WTC11 (cell line): ENCODE measurements at regions of chr1 and their contacts with region 1.

Region 1: DNA sequence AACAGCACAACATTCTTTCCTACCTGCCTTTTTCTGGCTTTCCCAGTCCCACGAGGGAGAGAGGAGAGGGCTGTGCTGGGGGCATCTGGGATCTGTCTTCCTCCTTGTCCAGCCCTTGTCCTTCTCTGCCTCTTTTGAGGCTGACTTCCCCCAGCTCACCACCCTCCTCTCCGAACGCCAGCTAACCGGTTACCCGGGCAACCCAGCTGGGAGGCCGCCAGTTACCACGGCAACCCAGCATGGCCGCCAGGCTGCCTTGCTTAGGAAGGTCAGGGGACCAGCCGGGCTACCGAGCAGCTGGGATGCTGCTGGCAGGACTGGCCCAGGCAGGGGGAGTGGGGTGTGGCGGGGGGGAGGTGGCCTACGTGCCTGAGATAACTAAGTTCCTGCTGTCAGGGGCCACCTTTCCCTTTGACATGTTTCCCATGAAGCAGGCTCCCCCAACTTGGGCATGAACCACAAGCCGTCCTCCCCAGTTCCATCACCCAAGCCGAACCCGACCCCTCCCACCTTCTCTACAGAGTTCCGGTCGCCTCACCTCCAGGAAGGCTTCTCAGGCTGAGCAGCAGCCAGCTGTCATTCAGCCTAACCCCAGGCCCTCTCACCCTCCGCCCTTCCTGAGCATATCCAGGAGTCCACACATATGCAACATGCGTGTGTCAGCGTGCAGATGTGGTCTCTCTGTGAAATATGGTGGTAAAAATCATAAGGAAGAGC is 8.7 kb downstream of the PLEKHA6 start:
- DNase-seq: peak; percentile 94
- ATAC-seq: peak; percentile 79
- H3K4me3 Mint-ChIP-seq: peak overlapping the region; percentile 51
- H3K27ac Mint-ChIP-seq: peak overlapping the region; percentile 54
- H3K4me1 Mint-ChIP-seq: peaks cover 32% of the 10 kb centered on the region
- H3K27me3 Mint-ChIP-seq: no peaks in the 10 kb centered on the region; the same call in 1 of the 2 replicates
- CTCF ChIP-seq: no peak

Region 2: GRCh38 chr1:204307334-204307883 is 43.6 kb before region 1 on chr1:
- CTCF ChIA-PET with region 1: interaction called, 14 read pairs
- POLR2A ChIA-PET with region 1: interaction called, 3 read pairs
- DNase-seq: peak; percentile 64
- ATAC-seq: peak; percentile 85
- H3K4me3 Mint-ChIP-seq: peak overlapping the region; percentile 68
- H3K27ac Mint-ChIP-seq: peak overlapping the region; percentile 35; the same call in 1 of the 2 replicates
- H3K4me1 Mint-ChIP-seq: peaks cover 80% of the 10 kb centered on the region
- H3K27me3 Mint-ChIP-seq: peaks cover 4% of the 10 kb centered on the region
- CTCF ChIP-seq: no peak

Region 3: DNA sequence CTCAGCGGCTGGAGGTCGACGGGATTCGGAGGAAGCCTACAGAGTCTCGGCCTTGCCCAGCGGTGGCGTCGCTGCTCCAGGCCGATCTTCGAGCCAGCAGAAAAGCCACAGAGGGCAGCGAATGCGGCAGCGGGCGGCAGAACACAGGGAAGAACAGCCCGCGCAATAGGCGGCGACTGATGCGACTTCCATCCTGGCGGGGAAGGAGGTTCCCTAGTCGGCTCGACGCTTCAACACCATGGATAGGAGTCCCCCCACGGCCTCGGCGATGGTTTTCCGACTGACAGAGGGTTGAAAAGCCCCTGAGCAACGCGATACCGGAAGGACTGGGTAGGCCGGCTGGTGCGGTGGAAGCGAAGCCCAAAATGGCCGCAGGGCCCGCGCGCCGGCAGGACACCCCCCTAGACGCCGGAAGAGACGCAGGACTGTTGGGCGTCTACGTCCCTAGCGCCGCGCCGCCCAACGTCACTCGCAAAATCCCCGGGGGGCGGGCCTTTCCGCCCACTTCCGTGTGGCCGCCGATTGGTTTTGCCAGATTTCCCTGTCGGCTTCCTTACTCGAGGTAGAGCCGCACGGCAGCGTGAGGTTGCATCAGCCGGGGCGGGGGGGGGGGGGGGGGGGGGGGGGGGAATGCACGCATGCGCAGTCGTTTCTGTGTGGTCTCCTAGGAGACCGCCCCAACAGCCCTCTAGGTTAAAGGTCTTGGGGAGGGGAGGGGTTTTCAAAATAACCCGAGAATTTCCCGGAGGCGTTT is 60.6 kb after region 1 on chr1 and contains the start of gene PPP1R15B:
- CTCF ChIA-PET with region 1: no interaction called
- POLR2A ChIA-PET with region 1: no interaction called
- DNase-seq: peak; percentile 97
- ATAC-seq: peak; percentile 93
- H3K4me3 Mint-ChIP-seq: peak within 1 kb of the TSS; percentile 100
- H3K27ac Mint-ChIP-seq: peak within 1 kb of the TSS; percentile 100
- H3K4me1 Mint-ChIP-seq: peaks cover 12% of the 10 kb centered on the region
- H3K27me3 Mint-ChIP-seq: no peaks in the 10 kb centered on the region
- CTCF ChIP-seq: no peak
- total RNA-seq, gene PPP1R15B: 43.7 to 47.7 TPM (median 44.6 TPM) in 3 replicates